Activated CD4-positive, alpha-beta memory T cell treated with anti-CD3 and anti-CD28 coated beads, Interleukin-2, amount 10 ng/mL, durations not matched to agents 7 days and 5 days (primary cell): ENCODE measurements at regions of chr17 and their contacts with region 1.

Region 1: GRCh38 chr17:32877164-32877764 is 340 bp upstream of the MYO1D start:
- DNase-seq: peak; percentile 95
- H3K4me3 Mint-ChIP-seq: peak overlapping the region; percentile 65
- H3K27ac Mint-ChIP-seq: peak overlapping the region; percentile 80
- H3K4me1 Mint-ChIP-seq: peaks cover 21% of the 10 kb centered on the region
- H3K27me3 Mint-ChIP-seq: no peaks in the 10 kb centered on the region

Region 2: GRCh38 chr17:32805029-32805976 is 72.0 kb before region 1 on chr17:
- CTCF ChIA-PET with region 1: interaction called, 11 read pairs
- POLR2A ChIA-PET with region 1: no interaction called
- DNase-seq: no peak
- H3K4me3 Mint-ChIP-seq: no peak overlapping the region
- H3K27ac Mint-ChIP-seq: no peak overlapping the region
- H3K4me1 Mint-ChIP-seq: peaks cover 16% of the 10 kb centered on the region
- H3K27me3 Mint-ChIP-seq: no peaks in the 10 kb centered on the region

Region 3: DNA sequence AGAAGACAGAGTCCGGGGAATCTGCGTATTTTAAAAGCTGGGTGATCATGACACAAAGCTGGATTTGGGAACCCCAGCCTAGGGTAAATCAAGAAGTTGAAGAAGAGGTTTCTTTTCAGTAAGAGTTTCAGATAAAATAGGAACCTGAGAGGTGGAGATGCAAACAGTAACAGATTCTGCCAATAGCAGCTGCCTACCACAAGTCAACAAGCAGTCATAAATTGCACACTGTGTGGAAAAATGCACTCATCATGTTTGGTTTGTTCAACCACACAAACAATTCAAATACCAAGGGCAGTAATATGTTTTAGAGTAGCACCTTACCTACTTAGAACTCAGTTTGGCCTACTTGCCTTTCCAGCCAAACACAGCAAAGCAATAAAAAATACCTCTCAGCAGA is 14.3 kb before region 1 on chr17:
- CTCF ChIA-PET with region 1: interaction called, 20 read pairs
- POLR2A ChIA-PET with region 1: no interaction called
- DNase-seq: no peak
- H3K4me3 Mint-ChIP-seq: no peak overlapping the region
- H3K27ac Mint-ChIP-seq: no peak overlapping the region
- H3K4me1 Mint-ChIP-seq: no peaks in the 10 kb centered on the region
- H3K27me3 Mint-ChIP-seq: no peaks in the 10 kb centered on the region

Region 4: GRCh38 chr17:32909787-32910369 is 32.6 kb after region 1 on chr17:
- CTCF ChIA-PET with region 1: interaction called, 50 read pairs
- POLR2A ChIA-PET with region 1: interaction called, 14 read pairs
- DNase-seq: peak; percentile 78
- H3K4me3 Mint-ChIP-seq: no peak overlapping the region
- H3K27ac Mint-ChIP-seq: no peak overlapping the region
- H3K4me1 Mint-ChIP-seq: peaks cover 28% of the 10 kb centered on the region
- H3K27me3 Mint-ChIP-seq: peaks cover 8% of the 10 kb centered on the region

Region 5: GRCh38 chr17:32936894-32937500 is 59.7 kb after region 1 on chr17:
- CTCF ChIA-PET with region 1: interaction called, 28 read pairs
- POLR2A ChIA-PET with region 1: no interaction called
- DNase-seq: peak; percentile 69
- H3K4me3 Mint-ChIP-seq: peak overlapping the region; percentile 10
- H3K27ac Mint-ChIP-seq: no peak overlapping the region
- H3K4me1 Mint-ChIP-seq: peaks cover 6% of the 10 kb centered on the region
- H3K27me3 Mint-ChIP-seq: peaks cover 13% of the 10 kb centered on the region